ENCODE measurements at regions of chr7 and their contacts with region 1.

Region 1: GRCh38 chr7:30764030-30764975 is 6.9 kb upstream of the MINDY4 start:
- DNase-seq: peak in 4 of 5 donors; percentile 43 to 59 (median 52)
- ATAC-seq: peak; percentile 71 to 81 (median 76)
- H3K4me3 ChIP-seq: no peak overlapping the region
- H3K27ac ChIP-seq: peak overlapping the region; percentile 17 to 69 (median 56)
- H3K4me1 ChIP-seq: peaks cover 0 to 53% (median 34%) of the 10 kb centered on the region in 12 donors
- H3K27me3 ChIP-seq: no peaks in the 10 kb centered on the region
- CTCF ChIP-seq: no peak
- POLR2A ChIP-seq: no peak

Region 2: DNA sequence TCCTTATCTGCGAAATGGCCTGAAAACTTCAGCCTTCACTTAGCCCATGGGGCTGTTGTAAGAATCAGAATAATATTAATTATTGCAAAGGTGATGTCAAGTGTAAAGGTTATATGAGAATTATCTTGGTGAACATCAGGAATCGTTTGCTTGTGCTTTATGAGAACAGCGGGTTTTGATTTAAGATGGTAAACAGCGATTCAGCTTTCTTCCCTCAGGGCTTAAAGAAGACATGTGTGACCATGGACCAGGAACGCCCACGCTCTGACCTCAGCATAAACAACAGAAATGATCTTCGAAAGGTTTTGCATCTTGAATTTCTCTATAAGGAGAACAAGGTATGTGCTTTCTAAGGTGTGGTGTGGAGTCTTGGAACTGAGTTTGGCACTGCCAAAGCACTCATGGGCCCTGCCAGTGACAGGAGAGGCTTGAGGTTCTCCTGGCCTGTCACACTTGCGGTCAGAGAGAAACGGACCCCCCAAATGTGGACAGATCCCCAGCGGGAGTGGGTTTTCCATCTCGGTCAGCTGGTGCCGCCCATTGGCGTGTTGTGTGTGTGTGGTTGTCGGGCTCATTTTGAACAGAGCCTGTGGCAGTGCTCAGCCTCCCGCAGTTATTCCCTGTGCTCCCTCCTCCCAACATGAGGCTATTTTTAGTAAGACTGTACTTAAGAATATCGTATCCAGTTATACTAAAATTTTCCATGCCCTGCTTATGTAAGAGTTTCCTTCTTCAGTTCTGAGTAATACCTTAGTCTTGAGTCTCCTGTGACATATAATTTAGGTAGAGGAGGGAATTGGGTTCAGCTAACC is 14.1 kb after region 1 on chr7:
- intact Hi-C with region 1: loop called in 1 of 10 experiments (anchors 1 kb)
- DNase-seq: peak in 4 of 5 donors; percentile 42 to 65 (median 52)
- ATAC-seq: peak; percentile 61 to 89 (median 84)
- H3K4me3 ChIP-seq: peak overlapping the region in 2 of 12 donors; percentile 5 to 11
- H3K27ac ChIP-seq: peak overlapping the region in 11 of 12 donors; percentile 19 to 86 (median 69)
- H3K4me1 ChIP-seq: peaks cover 0 to 39% (median 12%) of the 10 kb centered on the region in 12 donors
- H3K27me3 ChIP-seq: no peaks in the 10 kb centered on the region
- CTCF ChIP-seq: no peak
- POLR2A ChIP-seq: no peak

Measured in heart left ventricle (tissue), 16 donors.